ENCODE measurements at regions of chr7 and their contacts with region 1.

Region 1: DNA sequence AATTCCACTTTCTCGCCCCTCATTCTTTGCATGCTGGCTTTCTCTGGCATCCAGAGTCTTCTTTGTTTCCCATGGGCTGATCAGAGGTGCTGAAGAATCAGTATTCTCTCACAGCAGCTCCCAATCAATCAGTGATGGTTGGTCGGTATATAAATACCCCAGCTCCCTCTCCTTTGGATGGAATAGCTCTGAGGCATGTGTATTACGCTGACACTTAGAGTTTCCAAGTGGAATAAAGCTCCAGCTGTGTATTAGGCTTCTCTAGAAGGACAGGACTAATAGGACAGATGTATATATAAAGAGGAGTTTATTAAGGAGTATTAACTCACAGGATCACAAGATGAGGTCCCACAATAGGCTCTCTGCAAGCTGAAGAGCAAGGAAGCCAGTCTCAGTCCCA is 218.3 kb upstream of the GRB10 start:
- DNase-seq: no peak
- ATAC-seq: peak; percentile 95
- H3K4me3 Mint-ChIP-seq: no peak overlapping the region
- H3K27ac Mint-ChIP-seq: no peak overlapping the region
- H3K4me1 Mint-ChIP-seq: no peaks in the 10 kb centered on the region; the same call in 1 of the 2 replicates
- H3K27me3 Mint-ChIP-seq: no peaks in the 10 kb centered on the region
- CTCF ChIP-seq: no peak

Region 2: GRCh38 chr7:50467817-50468610 is 532.9 kb before region 1 on chr7:
- CTCF ChIA-PET with region 1: interaction called, 12 read pairs
- POLR2A ChIA-PET with region 1: no interaction called
- DNase-seq: peak; percentile 86
- ATAC-seq: peak; percentile 91
- H3K4me3 Mint-ChIP-seq: no peak overlapping the region
- H3K27ac Mint-ChIP-seq: no peak overlapping the region
- H3K4me1 Mint-ChIP-seq: 0 out of 2 replicates have a peak, but pooled peaks cover 5% of the 10 kb centered on the region
- H3K27me3 Mint-ChIP-seq: peaks cover 27% of the 10 kb centered on the region
- CTCF ChIP-seq: peak; percentile 77

Region 3: GRCh38 chr7:50768485-50769484 is 232.2 kb before region 1 on chr7:
- CTCF ChIA-PET with region 1: interaction called, 11 read pairs
- POLR2A ChIA-PET with region 1: no interaction called
- DNase-seq: no peak
- ATAC-seq: peak; percentile 72
- H3K4me3 Mint-ChIP-seq: peak overlapping the region; percentile 0
- H3K27ac Mint-ChIP-seq: peak overlapping the region; percentile 81
- H3K4me1 Mint-ChIP-seq: peaks cover 86% of the 10 kb centered on the region
- H3K27me3 Mint-ChIP-seq: no peaks in the 10 kb centered on the region
- CTCF ChIP-seq: no peak

Region 4: DNA sequence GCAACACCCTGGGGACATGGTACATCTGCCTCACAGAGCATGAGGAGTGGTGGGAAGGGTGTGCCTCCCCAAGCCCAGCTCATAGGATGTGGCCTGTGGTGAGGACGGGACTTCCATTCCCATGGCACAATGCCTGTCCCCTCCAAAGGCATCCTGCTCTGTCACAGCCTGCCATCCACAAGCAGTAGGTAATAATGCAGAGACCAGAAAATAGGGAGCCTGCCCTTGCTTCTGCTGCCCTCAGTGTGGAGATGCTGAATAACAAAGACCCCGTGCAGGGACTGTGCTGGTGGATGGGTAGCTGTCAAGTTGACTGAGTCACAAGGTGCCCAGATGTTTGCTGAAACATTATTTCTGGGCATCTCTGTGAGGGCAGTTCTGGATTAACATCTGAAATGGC is 18.3 kb before region 1 on chr7:
- CTCF ChIA-PET with region 1: interaction called, 29 read pairs
- POLR2A ChIA-PET with region 1: no interaction called
- DNase-seq: peak; percentile 44
- ATAC-seq: peak; percentile 84
- H3K4me3 Mint-ChIP-seq: no peak overlapping the region
- H3K27ac Mint-ChIP-seq: no peak overlapping the region
- H3K4me1 Mint-ChIP-seq: peaks cover 50% of the 10 kb centered on the region
- H3K27me3 Mint-ChIP-seq: peaks cover 8% of the 10 kb centered on the region; the same call in 1 of the 2 replicates
- CTCF ChIP-seq: peak; percentile 44; the same call in 1 of the 2 replicates

Region 5: DNA sequence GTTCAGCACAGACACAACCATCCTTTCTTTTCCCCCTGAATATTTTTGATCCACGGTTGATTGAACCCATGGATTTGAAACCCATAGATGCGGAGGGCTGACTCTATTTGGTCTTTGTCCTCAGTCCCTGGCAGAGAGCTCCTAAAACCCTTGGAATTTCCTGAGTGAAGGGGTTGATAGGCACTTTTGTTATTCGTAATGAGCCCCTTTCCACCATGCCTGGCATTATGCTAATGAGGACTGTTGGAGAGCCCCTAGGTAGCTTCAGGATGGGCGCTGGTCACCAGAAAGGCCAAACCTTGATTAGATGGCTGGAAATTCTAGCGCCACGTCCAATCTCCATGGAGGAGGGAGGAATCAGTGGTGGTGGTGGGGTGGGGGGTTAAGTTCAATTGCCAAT is 12.5 kb before region 1 on chr7:
- CTCF ChIA-PET with region 1: interaction called, 29 read pairs
- POLR2A ChIA-PET with region 1: no interaction called
- DNase-seq: no peak
- ATAC-seq: peak; percentile 92
- H3K4me3 Mint-ChIP-seq: no peak overlapping the region
- H3K27ac Mint-ChIP-seq: peak overlapping the region; percentile 63; the same call in 1 of the 2 replicates
- H3K4me1 Mint-ChIP-seq: peaks cover 45% of the 10 kb centered on the region
- H3K27me3 Mint-ChIP-seq: peaks cover 8% of the 10 kb centered on the region; the same call in 1 of the 2 replicates
- CTCF ChIP-seq: no peak